Mammary epithelial cell (primary cell): ENCODE measurements at regions of chr2 and their contacts with region 1.

Region 1: DNA sequence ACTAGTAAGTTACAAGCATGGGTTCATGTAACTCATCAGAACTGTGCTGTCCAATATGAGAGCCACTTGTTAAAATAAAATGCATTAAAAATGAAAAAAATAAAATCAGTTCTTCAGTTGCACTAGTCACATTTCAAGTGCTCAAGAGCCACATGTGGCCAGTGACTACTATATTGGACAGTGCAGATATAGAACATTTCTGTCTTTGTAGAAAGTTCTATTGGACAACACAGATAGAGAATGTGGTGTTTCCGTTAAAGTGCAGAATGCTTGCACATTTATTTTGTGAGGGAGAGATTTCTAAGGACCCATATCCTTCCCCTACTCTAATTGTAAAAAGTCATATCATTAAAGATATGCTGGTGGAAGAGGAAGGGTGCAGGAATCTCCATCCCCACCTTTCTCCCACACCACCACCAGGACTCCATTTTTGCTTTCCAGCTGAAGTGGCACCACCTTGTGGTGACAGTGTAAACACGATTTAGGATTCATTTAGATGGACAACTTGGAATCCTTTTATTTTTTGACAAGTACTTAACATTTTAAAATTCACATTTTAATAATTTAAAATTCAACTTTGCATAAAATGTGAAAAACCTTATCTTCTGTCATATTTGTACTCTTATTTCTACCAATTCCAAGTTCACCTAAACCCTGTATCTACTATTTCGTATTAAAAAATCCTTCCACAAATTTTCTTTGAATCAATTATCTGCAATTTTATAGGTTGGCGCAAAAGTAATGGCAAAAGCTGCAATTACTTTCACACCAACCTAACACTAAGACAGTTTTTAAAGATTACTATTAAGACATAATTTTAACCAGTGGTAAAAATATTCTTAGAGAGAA is 9.4 kb upstream of the CD302 start:
- DNase-seq: peak; percentile 32
- H3K4me3 ChIP-seq: no peak overlapping the region
- H3K27ac ChIP-seq: no peak overlapping the region
- H3K4me1 ChIP-seq: no peaks in the 10 kb centered on the region
- H3K27me3 ChIP-seq: no peaks in the 10 kb centered on the region
- CTCF ChIP-seq: peak; percentile 79

Region 2: DNA sequence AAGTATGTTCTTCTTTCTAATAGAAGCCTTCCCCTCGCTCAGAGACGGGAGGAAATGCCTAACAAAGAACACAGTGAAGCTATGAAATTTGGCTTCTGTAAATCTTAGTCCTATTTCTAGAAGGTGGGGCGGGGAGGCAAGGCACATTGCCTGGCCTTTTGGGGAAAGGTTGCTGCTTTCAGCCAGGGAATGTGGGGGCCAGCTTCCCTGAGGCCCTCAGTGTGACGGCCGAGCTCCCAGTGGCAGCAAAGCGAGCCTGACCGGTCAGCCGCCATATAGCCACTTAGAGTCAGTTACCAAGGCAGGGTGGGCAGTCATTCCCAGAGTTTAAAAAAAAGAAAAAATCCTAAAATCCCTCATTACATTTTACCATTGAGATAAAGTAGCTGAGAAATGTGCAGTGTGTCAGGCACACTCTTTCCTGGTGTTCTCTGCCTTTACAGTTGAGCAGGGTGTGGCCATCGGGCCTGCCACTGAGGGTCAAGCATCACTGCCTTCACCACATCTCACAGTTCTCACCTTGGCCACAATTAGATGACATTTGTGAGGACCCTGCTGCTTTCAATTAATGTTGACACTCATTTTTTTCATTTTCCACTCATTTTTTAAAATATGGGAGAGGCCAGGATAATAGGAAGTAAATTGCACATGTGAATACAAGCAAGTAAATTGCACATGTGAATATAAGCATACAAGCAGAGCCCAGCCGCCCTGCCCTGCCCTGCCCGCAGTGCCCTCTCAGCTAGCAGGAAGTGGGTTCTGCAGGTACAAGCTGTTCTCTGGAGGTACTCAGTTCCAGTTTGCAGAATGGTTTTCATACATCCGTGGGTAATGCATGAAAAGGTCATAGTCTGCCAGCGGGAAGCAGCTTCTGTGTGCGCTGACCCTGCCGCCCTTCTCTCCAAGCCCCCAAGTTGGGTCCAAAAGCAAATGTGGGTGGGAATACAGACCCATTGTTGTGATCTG is 597.8 kb before region 1 on chr2:
- CTCF ChIA-PET with region 1: no interaction called
- dilution Hi-C with region 1: no loop called
- in situ Hi-C with region 1: no loop called
- intact Hi-C with region 1: loop called (anchors 5 kb)
- DNase-seq: no peak
- H3K4me3 ChIP-seq: no peak overlapping the region
- H3K27ac ChIP-seq: no peak overlapping the region
- H3K4me1 ChIP-seq: peaks cover 8% of the 10 kb centered on the region
- H3K27me3 ChIP-seq: no peaks in the 10 kb centered on the region
- CTCF ChIP-seq: no peak

Region 3: DNA sequence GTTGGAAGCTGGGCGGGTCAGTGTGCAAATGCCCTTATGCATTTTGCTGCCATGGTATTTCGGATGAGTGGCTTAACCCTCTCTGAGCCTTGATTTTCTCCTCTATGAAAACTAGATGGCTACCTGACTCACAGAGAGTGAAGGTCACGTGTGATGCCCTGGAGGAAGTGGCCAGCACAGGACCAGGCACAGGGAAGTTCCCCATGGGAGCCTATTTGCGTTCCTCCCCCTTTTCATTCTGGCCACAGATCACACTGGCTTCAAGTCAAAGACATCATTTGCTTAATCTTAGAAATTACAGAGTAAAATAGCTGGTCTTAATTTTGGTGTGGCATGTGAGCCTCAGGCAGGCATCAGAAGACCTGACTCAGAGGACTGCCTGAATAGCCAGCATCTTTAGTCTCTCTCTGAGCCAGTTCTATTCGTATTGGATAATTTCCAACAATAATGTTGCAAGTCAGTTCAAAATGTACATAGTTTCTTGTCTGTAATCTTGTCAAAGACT is 48.2 kb after region 1 on chr2:
- CTCF ChIA-PET with region 1: no interaction called
- dilution Hi-C with region 1: no loop called
- in situ Hi-C with region 1: no loop called
- intact Hi-C with region 1: no loop called
- DNase-seq: peak; percentile 2
- H3K4me3 ChIP-seq: no peak overlapping the region
- H3K27ac ChIP-seq: no peak overlapping the region
- H3K4me1 ChIP-seq: no peaks in the 10 kb centered on the region
- H3K27me3 ChIP-seq: no peaks in the 10 kb centered on the region
- CTCF ChIP-seq: no peak

Region 4: GRCh38 chr2:159873258-159873657 is 65.9 kb after region 1 on chr2:
- CTCF ChIA-PET with region 1: no interaction called
- dilution Hi-C with region 1: no loop called
- in situ Hi-C with region 1: no loop called
- intact Hi-C with region 1: no loop called
- DNase-seq: no peak
- H3K4me3 ChIP-seq: no peak overlapping the region
- H3K27ac ChIP-seq: no peak overlapping the region
- H3K4me1 ChIP-seq: no peaks in the 10 kb centered on the region
- H3K27me3 ChIP-seq: no peaks in the 10 kb centered on the region
- CTCF ChIP-seq: no peak

Region 5: GRCh38 chr2:159895258-159896065 is 88.1 kb after region 1 on chr2:
- CTCF ChIA-PET with region 1: no interaction called
- dilution Hi-C with region 1: no loop called
- in situ Hi-C with region 1: no loop called
- intact Hi-C with region 1: no loop called
- DNase-seq: no peak
- H3K4me3 ChIP-seq: no peak overlapping the region
- H3K27ac ChIP-seq: no peak overlapping the region
- H3K4me1 ChIP-seq: peaks cover 38% of the 10 kb centered on the region
- H3K27me3 ChIP-seq: no peaks in the 10 kb centered on the region
- CTCF ChIP-seq: no peak

Region 6: DNA sequence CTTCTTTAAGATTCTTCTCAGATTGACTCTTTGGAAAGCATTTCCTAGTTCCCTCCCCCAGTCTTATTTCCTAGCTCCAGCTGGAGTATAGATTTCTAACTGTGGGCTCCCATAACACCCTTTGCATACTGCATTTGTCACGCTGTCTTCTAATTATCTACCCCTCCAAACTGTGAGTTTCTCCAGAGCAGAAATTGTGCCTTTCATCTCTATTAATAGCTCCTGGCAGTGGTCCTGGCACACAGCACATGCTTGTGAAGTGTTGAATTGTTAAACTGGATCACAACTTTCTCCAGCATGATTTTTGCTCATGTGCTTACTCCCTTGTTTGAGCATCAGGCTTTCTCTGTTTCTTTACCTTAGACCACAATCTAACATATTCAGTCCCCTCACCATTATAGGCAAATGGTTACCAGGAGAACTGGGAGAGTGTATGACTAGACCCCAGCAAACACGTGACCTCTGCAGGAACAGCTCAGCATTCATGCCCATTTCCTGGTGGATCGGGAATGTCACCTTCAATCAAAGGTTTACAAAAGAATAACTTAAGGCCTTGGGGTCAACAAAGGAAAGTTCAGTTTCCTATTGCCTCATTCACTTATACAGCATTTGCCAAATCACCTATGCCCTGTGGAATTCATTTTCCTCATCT is 1177.1 kb after region 1 on chr2:
- CTCF ChIA-PET with region 1: no interaction called
- dilution Hi-C with region 1: no loop called
- in situ Hi-C with region 1: no loop called
- intact Hi-C with region 1: no loop called
- DNase-seq: no peak
- H3K4me3 ChIP-seq: no peak overlapping the region
- H3K27ac ChIP-seq: no peak overlapping the region
- H3K4me1 ChIP-seq: no peaks in the 10 kb centered on the region
- H3K27me3 ChIP-seq: no peaks in the 10 kb centered on the region
- CTCF ChIP-seq: no peak